ENCODE measurements at regions of chr16 and their contacts with region 1.

Region 1: DNA sequence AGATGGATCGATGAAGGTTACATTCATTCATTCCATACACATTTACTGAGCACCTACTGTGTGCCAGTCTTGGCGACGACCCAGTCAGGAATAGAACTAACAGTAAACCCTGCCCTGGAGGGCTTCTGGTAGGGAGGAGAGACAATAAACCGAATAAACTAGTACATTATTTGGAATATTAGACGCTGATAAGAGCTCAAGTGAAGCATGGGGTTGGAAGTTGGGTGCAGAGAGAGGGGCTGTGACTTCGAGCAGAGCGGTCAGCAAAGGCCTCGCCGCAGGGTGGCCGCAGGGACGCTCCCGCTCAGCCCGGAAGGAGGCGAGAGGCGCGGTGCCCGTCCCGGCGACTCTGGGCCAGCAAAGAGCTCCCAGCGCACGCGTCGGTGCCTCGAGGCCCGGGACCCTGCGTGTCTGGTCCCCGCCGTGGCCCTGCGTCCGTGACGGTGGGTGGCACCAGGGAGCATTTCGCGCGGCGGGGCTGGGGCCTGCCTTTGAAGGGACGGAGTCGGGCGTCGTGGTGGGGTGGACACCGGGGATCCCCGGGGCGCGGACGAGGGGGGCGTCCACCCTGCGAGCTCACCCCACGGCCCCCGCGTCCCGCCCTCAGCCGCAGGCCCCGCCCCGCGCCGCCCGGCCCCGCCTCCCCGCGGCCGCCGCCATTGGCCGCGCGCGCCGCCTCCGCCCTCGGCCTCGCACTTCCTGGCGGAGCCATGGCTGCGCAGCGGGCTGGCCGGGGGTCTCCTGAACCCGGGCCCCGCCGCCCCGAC is at the start of gene KLHL36:
- DNase-seq: peak; percentile 83
- ATAC-seq: peak; percentile 90
- H3K4me3 ChIP-seq: peak within 1 kb of the TSS; percentile 42 to 75 (median 70)
- H3K4me3 Mint-ChIP-seq: peak within 1 kb of the TSS; percentile 92
- H3K27ac ChIP-seq: peak within 1 kb of the TSS; percentile 56 to 83
- H3K27ac Mint-ChIP-seq: peak within 1 kb of the TSS; percentile 92
- H3K4me1 ChIP-seq: peaks cover 34 to 44% of the 10 kb centered on the region in 2 donors
- H3K4me1 Mint-ChIP-seq: peaks cover 51% of the 10 kb centered on the region
- H3K27me3 ChIP-seq: no peaks in the 10 kb centered on the region
- H3K27me3 Mint-ChIP-seq: no peaks in the 10 kb centered on the region
- CTCF ChIP-seq: no peak
- total RNA-seq, gene KLHL36: 133 and 135 TPM in 2 replicates

Region 2: DNA sequence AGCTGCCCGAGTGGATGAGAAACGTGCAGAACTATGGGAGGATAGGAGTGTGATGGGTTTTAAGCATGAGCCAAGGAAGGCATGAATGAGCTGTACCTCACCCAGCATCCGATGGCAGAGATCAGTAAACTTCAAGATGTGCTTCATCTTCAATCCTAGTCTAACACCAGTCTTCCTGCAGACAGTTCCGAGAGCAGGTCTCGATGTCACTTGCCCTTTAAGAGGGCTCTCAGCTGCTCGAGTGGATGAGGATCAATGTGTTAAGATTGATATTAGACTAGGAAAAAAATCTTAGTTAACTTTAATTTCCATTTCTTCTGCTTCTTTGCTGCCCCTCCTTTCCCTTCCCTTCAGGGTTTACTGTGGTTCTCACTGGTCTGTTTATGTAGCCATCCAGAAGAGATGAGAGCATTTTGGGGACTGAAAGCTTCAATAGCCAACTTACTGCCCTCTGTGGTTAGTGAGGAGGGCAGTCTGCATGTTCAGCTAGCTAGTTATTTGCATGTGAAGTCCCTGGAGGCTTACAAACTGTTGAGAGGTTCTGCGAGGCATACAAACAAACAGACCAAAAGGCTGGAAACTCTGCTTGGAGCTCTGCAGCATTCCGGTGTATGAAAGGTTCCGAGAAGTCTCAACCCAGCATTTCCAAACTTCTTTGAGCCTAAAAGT is 15.6 kb after region 1 on chr16:
- CTCF ChIA-PET with region 1: interaction called, 10 read pairs
- POLR2A ChIA-PET with region 1: no interaction called
- intact Hi-C with region 1: no loop called
- DNase-seq: peak; percentile 61
- ATAC-seq: peak; percentile 93
- H3K4me3 ChIP-seq: peak overlapping the region in 1 of 5 experiments; percentile 20
- H3K4me3 Mint-ChIP-seq: peak overlapping the region; percentile 78
- H3K27ac ChIP-seq: peak overlapping the region in 1 of 2 donors; percentile 16
- H3K27ac Mint-ChIP-seq: peak overlapping the region; percentile 69
- H3K4me1 ChIP-seq: peaks cover 23 to 24% of the 10 kb centered on the region in 2 donors
- H3K4me1 Mint-ChIP-seq: peaks cover 29% of the 10 kb centered on the region
- H3K27me3 ChIP-seq: no peaks in the 10 kb centered on the region
- H3K27me3 Mint-ChIP-seq: no peaks in the 10 kb centered on the region
- CTCF ChIP-seq: no peak